Pancreas (tissue), 10 donors: ENCODE measurements at regions of chr16 and their contacts with region 1.

Region 1: DNA sequence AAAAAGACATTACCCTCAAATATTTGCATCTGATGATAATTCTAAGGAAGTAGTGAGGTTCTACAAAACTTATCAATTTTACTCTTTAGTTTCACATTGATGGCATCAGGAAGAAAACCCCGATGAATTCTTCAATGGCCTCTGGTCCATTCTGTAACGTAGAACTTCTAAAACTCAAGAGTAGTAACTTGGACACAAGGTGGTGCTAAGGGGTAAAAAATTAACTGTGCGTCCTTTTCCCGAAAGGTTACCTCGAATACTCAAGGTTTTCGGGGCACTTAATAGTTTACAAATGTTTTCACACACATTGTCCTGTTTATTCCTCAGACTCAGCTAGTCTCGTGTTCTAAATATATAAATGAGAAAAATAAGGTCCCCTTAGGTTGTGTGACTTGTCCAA is 517.3 kb upstream of the ZFHX3 start:
- DNase-seq: no peak
- ATAC-seq: peak in 2 of 4 donors; percentile 35 to 47
- H3K4me3 ChIP-seq: no peak overlapping the region
- H3K27ac ChIP-seq: no peak overlapping the region
- H3K4me1 ChIP-seq: no peaks in the 10 kb centered on the region
- H3K27me3 ChIP-seq: no peaks in the 10 kb centered on the region
- CTCF ChIP-seq: no peak

Region 2: DNA sequence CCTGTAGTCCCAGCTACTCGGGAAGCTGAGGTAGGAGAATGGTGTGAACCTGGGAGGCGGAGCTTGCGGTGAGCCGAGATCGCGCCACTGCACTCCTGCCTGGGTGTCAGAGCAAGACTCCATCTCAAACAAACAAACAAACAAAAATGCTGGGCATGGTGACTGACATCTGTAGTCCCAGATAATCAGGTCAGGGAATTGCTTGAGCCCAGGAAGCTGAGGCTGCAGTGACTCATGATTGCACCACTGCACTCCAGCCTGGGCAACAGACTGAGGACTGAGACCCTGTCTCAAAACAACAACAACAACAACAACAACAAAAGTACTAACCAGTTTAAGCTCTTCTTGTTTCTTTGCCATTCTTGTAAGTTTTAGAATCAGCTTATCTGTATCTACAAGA is 1010.3 kb before region 1 on chr16:
- intact Hi-C with region 1: no loop called
- DNase-seq: no peak
- ATAC-seq: no peak
- H3K4me3 ChIP-seq: no peak overlapping the region
- H3K27ac ChIP-seq: no peak overlapping the region
- H3K4me1 ChIP-seq: no peaks in the 10 kb centered on the region
- H3K27me3 ChIP-seq: no peaks in the 10 kb centered on the region
- CTCF ChIP-seq: no peak

Region 3: GRCh38 chr16:73794994-73795393 is 229.7 kb after region 1 on chr16:
- intact Hi-C with region 1: no loop called
- DNase-seq: no peak
- ATAC-seq: peak in 1 of 4 donors; percentile 29
- H3K4me3 ChIP-seq: no peak overlapping the region
- H3K27ac ChIP-seq: no peak overlapping the region
- H3K4me1 ChIP-seq: no peaks in the 10 kb centered on the region
- H3K27me3 ChIP-seq: peaks cover 0 to 5% (median 0%) of the 10 kb centered on the region in 4 donors
- CTCF ChIP-seq: no peak

Region 4: DNA sequence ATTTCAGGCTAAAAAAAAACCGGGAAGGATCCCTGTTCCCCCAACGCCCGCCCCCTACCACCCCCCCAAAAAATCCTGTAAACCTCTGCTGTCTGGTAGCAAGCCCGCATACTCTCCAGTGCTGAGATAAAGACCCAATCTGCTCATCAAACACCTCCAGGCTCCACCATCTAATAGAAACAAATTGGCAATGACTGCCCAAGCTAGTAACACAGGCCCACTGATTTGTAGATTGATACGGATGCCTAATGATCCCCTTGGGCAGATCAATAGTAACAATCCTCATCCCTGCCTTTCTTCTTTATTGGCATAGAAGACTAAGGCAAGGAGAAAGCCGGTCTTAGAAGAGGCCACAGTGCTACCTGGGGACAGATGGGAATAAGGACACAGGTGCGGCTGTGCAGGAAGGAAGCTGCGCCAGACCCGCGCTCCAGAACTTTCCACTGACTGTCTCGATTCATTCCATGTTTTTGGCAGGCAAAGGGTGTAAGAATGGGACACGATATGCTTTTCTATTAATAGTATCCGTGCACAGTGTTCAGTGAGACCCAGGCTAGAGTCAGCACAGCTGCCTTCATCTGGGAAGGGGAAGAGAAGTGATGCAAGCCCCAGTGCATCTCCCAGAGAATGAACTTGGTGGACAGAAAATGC is 323.7 kb after region 1 on chr16:
- intact Hi-C with region 1: loop called in 1 of 3 experiments (anchors 10 kb)
- DNase-seq: no peak
- ATAC-seq: no peak
- H3K4me3 ChIP-seq: no peak overlapping the region
- H3K27ac ChIP-seq: no peak overlapping the region
- H3K4me1 ChIP-seq: no peaks in the 10 kb centered on the region
- H3K27me3 ChIP-seq: peaks cover 0 to 36% (median 7%) of the 10 kb centered on the region in 4 donors
- CTCF ChIP-seq: no peak

Region 5: GRCh38 chr16:74684131-74684530 is 1118.9 kb after region 1 on chr16:
- intact Hi-C with region 1: no loop called
- DNase-seq: no peak
- ATAC-seq: no peak
- H3K4me3 ChIP-seq: no peak overlapping the region
- H3K27ac ChIP-seq: no peak overlapping the region
- H3K4me1 ChIP-seq: no peaks in the 10 kb centered on the region
- H3K27me3 ChIP-seq: no peaks in the 10 kb centered on the region
- CTCF ChIP-seq: no peak